ENCODE measurements at regions of chr12 and their contacts with region 1.

Region 1: DNA sequence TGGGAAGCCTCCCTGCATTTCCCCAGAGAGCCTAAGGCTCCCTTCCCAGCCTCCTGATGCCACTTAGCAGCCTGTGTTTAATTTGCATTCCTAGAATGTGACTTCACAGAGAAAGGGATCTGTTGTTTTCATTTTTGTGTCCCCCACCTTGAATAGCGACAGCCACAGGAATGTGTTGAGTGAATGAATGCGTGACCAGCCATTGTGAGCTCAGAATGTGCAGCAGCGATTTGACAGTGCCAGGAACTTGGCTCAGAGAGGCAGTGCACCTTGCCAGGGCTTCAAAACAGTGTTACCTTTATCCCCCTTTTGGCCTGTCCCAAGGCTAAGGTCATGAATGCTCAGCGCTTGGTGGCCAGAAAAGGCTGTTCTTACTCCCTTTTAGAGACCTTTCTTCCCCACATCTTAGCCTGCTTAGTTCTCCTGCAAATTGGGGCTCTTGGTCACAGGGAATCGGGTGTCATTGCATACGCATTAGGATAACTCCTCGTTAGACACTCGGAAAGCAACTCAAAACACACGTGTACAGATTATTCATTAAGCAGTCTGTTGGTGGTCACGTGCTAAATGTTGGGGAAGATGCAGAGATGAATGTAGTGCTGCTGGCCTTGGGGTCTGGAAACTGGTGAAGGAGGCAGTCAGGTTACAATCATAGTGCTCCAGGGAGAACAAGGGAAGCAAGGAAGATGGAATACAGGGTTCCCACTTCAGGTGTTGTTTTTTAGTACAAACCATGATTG is 9.8 kb downstream of the NTF3 start:
- DNase-seq: peak in 1 of 2 donors; percentile 80
- H3K4me3 ChIP-seq: no peak overlapping the region
- H3K27ac ChIP-seq: peak overlapping the region; percentile 12 to 63
- H3K4me1 ChIP-seq: peaks cover 0 to 2% of the 10 kb centered on the region in 2 donors
- H3K27me3 ChIP-seq: peaks cover 0 to 9% of the 10 kb centered on the region in 2 donors
- CTCF ChIP-seq: no peak
- POLR2A ChIP-seq: no peak

Region 2: GRCh38 chr12:5456906-5457305 is 15.2 kb after region 1 on chr12:
- intact Hi-C with region 1: loop called (anchors 2 kb)
- DNase-seq: no peak
- H3K4me3 ChIP-seq: no peak overlapping the region
- H3K27ac ChIP-seq: peak overlapping the region; percentile 44 to 46
- H3K4me1 ChIP-seq: no peaks in the 10 kb centered on the region
- H3K27me3 ChIP-seq: no peaks in the 10 kb centered on the region
- CTCF ChIP-seq: no peak
- POLR2A ChIP-seq: no peak

Region 3: GRCh38 chr12:5685966-5686365 is 244.3 kb after region 1 on chr12:
- intact Hi-C with region 1: no loop called
- DNase-seq: no peak
- H3K4me3 ChIP-seq: no peak overlapping the region
- H3K27ac ChIP-seq: no peak overlapping the region
- H3K4me1 ChIP-seq: no peaks in the 10 kb centered on the region
- H3K27me3 ChIP-seq: peaks cover 0 to 8% of the 10 kb centered on the region in 2 donors
- CTCF ChIP-seq: no peak
- POLR2A ChIP-seq: no peak

Measured in breast epithelium (tissue), 4 donors.